Heart right ventricle (tissue), 16 donors: ENCODE measurements at regions of chr1 and their contacts with region 1.

Region 1: GRCh38 chr1:27469334-27469733 is 20.6 kb downstream of the WASF2 start:
- DNase-seq: no peak
- ATAC-seq: no peak
- H3K4me3 ChIP-seq: no peak overlapping the region
- H3K27ac ChIP-seq: no peak overlapping the region
- H3K4me1 ChIP-seq: peaks cover 3 to 96% (median 73%) of the 10 kb centered on the region in 9 donors
- H3K27me3 ChIP-seq: no peaks in the 10 kb centered on the region
- CTCF ChIP-seq: no peak

Region 2: GRCh38 chr1:27133991-27134390 is 335.3 kb before region 1 on chr1:
- intact Hi-C with region 1: loop called in 1 of 10 experiments (anchors 5 kb)
- DNase-seq: no peak
- ATAC-seq: no peak
- H3K4me3 ChIP-seq: no peak overlapping the region
- H3K27ac ChIP-seq: peak overlapping the region in 7 of 10 donors; percentile 35 to 88 (median 64)
- H3K4me1 ChIP-seq: peaks cover 10 to 96% (median 64%) of the 10 kb centered on the region in 9 donors
- H3K27me3 ChIP-seq: no peaks in the 10 kb centered on the region
- CTCF ChIP-seq: no peak

Region 3: GRCh38 chr1:27392096-27392777 is 77.1 kb before region 1 on chr1 and contains the start of gene GPR3:
- intact Hi-C with region 1: no loop called
- DNase-seq: peak; percentile 92 to 93
- ATAC-seq: peak; percentile 87 to 92 (median 90)
- H3K4me3 ChIP-seq: peak within 1 kb of the TSS; percentile 26 to 69 (median 55)
- H3K27ac ChIP-seq: peak within 1 kb of the TSS; percentile 5 to 82 (median 76)
- H3K4me1 ChIP-seq: peaks cover 7 to 50% (median 36%) of the 10 kb centered on the region in 9 donors
- H3K27me3 ChIP-seq: no peaks in the 10 kb centered on the region
- CTCF ChIP-seq: peak; percentile 22 to 79 (median 58)
- total RNA-seq, gene GPR3: 0.27 to 2.0 (median 0.42) TPM in 9 of 10 donors, not detected in the other